Activated T-helper 1 cell treated with anti-CD3 and anti-CD28 coated beads, Interleukin-12 subunit alpha, Interleukin-12 subunit beta, Interleukin-2, Interleukin-4 antibody, amounts not matched to agents 30 ng/mL and 10 ng/mL and 1 ng/mL, durations not matched to agents 14 hours and 24 hours and 36 hours (primary cell): ENCODE measurements at regions of chr3 and their contacts with region 1.

Region 1: GRCh38 chr3:156674046-156674910 is at the start of gene TIPARP:
- DNase-seq: peak; percentile 100
- H3K4me3 Mint-ChIP-seq: peak within 1 kb of the TSS; percentile 95
- H3K27ac Mint-ChIP-seq: peak within 1 kb of the TSS; percentile 98
- H3K4me1 Mint-ChIP-seq: peaks cover 49% of the 10 kb centered on the region
- H3K27me3 Mint-ChIP-seq: no peaks in the 10 kb centered on the region
- total RNA-seq, gene TIPARP: 20.8 and 21.9 TPM in 2 replicates

Region 2: DNA sequence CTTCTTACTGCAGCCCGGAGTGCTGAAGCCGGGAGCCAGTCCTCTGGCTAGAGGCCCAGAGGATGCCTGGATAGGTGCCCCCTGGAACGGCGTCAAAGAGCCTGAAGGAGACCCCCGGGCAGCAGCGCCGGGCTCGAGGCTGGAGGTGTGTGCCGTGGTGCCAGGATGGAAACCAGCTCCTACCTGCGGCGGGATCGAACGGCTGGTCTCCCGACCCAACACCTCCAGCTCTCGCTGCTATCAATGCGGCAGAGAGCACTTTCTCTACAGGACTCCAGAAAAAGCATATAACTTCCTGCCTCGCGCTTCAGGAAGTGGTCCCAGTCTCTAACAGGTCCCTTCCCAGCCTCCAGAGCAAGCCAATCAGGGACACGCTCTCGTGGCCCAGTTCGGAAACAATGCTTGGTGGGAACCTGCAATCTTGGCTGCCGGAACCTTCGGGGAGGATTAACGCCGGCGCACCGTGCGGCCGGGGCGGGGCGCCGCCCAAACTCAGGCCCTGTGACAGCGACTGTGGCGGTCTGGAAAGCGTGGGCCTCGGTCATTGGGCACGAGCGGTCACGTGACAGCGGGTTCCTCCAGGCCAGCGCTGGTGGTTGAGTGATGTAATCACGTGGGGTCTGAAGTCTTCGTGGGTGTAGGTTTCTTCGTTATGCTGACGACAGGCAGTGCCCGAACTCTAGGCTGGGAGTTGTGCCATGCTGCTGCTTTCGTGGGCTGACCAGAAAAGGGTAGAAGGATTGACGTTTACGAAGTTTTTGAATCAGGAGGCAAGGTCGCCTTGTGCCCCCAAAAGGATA is 819.9 kb before region 1 on chr3 and contains the start of gene SLC33A1:
- intact Hi-C with region 1: loop called (anchors 10 kb)
- DNase-seq: peak; percentile 98
- H3K4me3 Mint-ChIP-seq: peak within 1 kb of the TSS; percentile 91
- H3K27ac Mint-ChIP-seq: peak within 1 kb of the TSS; percentile 96
- H3K4me1 Mint-ChIP-seq: peaks cover 36% of the 10 kb centered on the region
- H3K27me3 Mint-ChIP-seq: no peaks in the 10 kb centered on the region
- total RNA-seq, gene SLC33A1: 27.4 and 30.7 TPM in 2 replicates

Region 3: DNA sequence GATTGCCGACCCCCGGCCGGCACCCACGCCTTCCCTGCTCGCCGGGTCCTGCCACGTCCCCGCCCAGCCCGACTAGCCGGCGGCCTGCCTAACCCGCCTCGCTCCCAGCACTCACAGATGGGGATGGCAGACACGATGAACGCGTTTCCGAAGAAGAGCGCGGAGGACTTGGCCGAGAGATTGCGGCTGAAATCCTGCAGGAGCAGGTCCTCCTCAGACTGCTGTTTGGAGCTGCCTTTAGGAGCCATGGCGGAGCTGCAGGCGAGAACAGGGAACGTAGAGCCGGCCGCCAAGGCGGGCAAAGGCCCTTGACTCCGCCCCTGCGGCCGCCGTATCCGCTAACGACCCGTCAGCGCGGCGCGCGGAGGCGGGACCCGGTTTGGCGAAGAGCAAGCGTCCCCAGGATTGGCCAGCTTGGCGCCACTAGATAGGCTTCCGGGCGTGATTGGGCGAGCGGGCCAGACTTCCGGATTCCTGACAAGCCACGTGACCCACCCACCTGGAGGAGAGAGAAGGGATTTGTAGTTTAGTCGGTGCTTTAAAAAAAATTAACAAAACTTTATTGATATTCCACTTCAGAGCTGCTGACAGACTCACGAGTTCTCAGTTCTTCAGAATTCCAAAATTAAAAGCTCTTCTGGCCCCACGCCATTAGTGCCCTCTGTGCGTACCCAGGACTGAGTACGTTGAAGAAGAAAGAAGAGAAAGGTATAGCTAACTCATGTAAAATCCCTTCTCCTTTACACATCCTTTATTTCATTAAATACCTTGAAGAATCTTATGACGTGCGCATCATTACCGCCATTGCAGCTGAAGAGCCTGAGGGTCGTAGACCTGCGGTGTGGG is 119.2 kb before region 1 on chr3 and contains the start of gene SSR3:
- intact Hi-C with region 1: loop called (anchors 1 kb)
- DNase-seq: peak; percentile 99
- H3K4me3 Mint-ChIP-seq: peak within 1 kb of the TSS; percentile 95
- H3K27ac Mint-ChIP-seq: peak within 1 kb of the TSS; percentile 94
- H3K4me1 Mint-ChIP-seq: peaks cover 53% of the 10 kb centered on the region
- H3K27me3 Mint-ChIP-seq: no peaks in the 10 kb centered on the region
- total RNA-seq, gene SSR3: 149 and 162 TPM in 2 replicates

Region 4: DNA sequence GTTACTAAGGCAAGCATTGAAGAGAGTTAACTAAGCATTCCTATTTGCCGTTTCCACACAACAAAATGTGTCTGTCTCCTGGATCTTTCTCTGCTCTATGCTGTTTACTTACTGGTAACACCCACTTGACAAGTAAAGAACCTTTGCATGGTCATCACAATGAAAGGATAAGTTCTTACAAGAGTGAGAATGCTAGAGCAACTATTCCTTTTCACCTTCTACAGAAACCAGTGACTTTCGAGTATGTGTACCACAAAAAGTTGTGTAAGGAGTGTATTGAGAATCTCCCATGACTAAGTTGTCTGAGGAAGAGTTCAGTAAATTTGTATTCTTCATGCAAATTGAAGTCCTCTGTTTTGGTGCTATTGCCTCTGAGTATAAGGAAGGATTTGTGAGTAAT is 10.9 kb after region 1 on chr3:
- intact Hi-C with region 1: loop called (anchors 1 kb)
- DNase-seq: no peak
- H3K4me3 Mint-ChIP-seq: peak overlapping the region; percentile 61
- H3K27ac Mint-ChIP-seq: peak overlapping the region; percentile 45
- H3K4me1 Mint-ChIP-seq: peaks cover 88% of the 10 kb centered on the region
- H3K27me3 Mint-ChIP-seq: no peaks in the 10 kb centered on the region

Region 5: GRCh38 chr3:156816800-156817645 is 142.7 kb after region 1 on chr3:
- intact Hi-C with region 1: loop called (anchors 1 kb)
- DNase-seq: peak; percentile 90
- H3K4me3 Mint-ChIP-seq: peak overlapping the region; percentile 92
- H3K27ac Mint-ChIP-seq: peak overlapping the region; percentile 98
- H3K4me1 Mint-ChIP-seq: peaks cover 75% of the 10 kb centered on the region
- H3K27me3 Mint-ChIP-seq: no peaks in the 10 kb centered on the region

Region 6: GRCh38 chr3:157130467-157131251 is 456.4 kb after region 1 on chr3:
- intact Hi-C with region 1: loop called (anchors 1 kb)
- DNase-seq: peak; percentile 72
- H3K4me3 Mint-ChIP-seq: peak overlapping the region; percentile 59
- H3K27ac Mint-ChIP-seq: peak overlapping the region; percentile 90
- H3K4me1 Mint-ChIP-seq: peaks cover 84% of the 10 kb centered on the region
- H3K27me3 Mint-ChIP-seq: no peaks in the 10 kb centered on the region